Activated CD4-positive, alpha-beta T cell treated with anti-CD3 and anti-CD28 coated beads, Interleukin-2, amount 10 ng/mL, durations not matched to agents 7 days and 5 days (primary cell): ENCODE measurements at regions of chr2 and their contacts with region 1.

Region 1: DNA sequence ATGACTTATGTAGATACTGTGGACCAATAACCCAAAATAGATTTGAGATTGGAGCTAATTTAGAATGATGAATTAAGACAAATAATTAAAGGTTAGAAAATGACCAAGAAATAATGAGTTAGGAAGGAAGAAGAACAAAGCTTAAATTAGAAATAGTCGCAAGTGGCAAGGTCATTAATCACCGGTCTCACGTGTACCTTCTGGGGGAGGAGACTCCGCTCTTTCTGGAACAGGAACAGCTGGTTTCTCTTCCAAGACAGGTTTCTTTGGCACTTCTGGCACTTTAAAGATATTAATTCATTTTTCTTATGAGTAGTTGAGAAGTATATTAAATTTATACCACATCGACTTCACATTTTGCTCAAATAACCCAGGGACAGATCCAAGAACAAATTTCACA is 156.7 kb downstream of the TTN start:
- DNase-seq: no peak
- H3K4me3 Mint-ChIP-seq: no peak overlapping the region
- H3K27ac Mint-ChIP-seq: no peak overlapping the region
- H3K4me1 Mint-ChIP-seq: no peaks in the 10 kb centered on the region
- H3K27me3 Mint-ChIP-seq: no peaks in the 10 kb centered on the region

Region 2: DNA sequence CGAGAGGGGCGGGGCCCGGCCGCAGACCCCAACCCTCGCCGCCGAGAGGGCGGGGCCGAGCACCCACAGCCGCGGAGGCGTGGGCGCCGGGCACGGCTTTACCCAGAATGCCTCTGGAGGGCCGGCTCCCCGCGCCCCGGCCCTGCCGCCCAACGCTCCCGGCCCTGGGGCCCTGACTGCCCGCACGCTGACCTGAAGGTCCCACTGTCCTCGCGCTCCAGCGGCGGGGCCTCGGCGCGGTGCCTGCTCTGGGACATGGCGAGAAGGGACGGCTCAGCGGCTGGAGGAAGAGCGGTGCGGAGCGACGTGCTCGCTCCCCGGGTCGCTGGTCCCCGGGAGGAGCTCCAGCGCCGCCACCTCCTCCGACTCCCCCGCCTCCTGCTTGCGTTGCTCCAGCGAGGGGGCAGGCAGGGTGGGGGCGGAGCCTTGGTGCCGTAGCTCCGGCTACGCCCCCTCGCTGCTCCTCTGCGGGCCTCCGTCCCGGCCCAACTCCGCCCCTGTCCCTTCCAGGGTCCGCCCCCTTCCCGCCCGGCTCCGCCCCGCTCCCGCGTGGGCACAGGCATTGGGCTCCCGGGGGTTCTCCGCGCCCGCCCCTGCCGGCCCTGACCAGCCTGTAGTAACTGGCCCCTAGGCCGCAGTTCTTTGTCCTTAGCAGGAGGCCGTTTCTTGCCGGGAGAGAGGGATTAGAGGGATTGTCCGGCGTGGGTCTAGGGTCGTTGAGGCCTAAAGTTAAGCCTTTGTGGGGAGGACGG is 199.6 kb before region 1 on chr2 and contains the starts of genes PJVK and PRKRA:
- CTCF ChIA-PET with region 1: no interaction called
- POLR2A ChIA-PET with region 1: interaction called, 11 read pairs
- DNase-seq: peak; percentile 96
- H3K4me3 Mint-ChIP-seq: peak within 1 kb of the TSS; percentile 86
- H3K27ac Mint-ChIP-seq: peak within 1 kb of the TSS; percentile 94
- H3K4me1 Mint-ChIP-seq: peaks cover 33% of the 10 kb centered on the region
- H3K27me3 Mint-ChIP-seq: peaks cover 2% of the 10 kb centered on the region
- total RNA-seq, gene PJVK: 1.5 to 2.2 TPM
- total RNA-seq, gene PRKRA: 37.4 to 38.2 TPM